GM13976 (cell line): ENCODE measurements at regions of chr22 and their contacts with region 1.

Region 1: DNA sequence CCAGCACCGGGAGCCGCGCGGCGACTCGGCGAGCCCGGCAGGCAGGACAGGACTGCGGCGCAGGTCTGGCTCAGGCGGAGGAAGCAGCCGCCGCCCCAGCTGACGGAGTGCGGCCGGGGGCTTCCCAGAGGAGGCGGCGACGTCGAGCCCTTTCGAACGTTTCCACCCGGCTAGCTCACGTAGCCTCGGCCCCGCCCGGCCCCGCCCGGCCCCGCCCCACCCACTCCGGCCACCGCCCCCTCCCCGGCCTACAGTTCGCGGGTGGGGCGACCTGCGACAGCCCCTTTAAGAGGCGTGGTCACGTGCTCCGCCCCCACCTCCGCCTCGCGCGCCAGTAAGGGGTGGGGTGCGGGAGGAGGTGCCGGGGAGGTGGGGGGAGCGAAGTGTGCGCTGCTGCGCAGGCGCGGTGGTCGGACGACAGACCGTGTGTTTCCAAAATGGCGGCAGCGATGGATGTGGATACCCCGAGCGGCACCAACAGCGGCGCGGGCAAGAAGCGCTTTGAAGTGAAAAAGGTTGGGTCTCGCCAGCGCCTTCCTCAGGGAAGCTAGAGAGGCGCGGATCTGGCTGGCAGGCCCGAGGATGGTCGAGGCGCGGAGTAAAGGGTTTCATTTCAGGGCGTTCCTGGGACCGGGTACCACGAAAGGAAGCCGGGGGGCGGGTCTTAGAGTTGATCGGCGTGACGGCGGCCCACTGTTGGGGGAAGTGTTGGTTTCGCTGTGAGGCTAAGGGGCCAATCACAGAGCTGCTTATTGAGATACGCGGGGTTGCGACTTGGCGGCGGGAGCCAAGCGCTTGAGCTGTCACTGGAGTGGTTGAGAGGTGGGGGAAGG is at the start of gene RBX1:
- DNase-seq: peak; percentile 97
- CTCF ChIP-seq: no peak

Region 2: GRCh38 chr22:41085842-41086241 is 134.7 kb after region 1 on chr22:
- in situ Hi-C with region 1: loop called (anchors 10 kb)
- DNase-seq: no peak
- CTCF ChIP-seq: no peak